PC-3 (cell line): ENCODE measurements at regions of chr15 and their contacts with region 1.

Region 1: DNA sequence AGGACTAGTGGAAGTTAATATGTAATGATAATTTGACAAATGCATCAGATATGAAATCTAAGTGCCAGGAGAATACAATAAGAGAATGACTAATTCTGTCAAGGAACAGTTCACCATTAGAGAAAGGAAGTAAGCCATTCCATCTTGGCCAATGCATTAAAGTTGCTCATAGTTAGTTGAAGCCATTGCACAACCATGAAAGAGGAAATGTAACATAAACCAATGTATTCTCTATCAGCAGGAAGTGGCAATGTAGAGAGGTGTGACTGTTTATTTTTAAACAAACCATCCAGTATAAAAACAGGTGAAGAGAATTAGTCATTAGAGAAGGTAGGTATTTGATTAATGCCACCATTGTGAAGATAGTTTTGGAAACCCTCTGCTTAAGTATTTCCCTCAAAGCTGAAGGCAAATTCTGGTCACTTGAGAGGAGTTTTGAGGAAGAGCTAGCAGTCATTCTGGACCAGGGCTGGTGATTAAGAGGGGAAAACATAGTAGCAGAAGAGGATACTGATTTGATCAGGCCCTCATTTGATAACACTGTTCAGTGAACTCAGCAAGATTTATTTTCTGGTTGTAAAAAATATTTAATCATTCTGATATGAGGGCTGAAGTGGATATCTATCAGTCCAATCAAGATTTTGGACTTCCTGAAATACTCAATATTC is 10.8 kb upstream of the ANXA2 start:
- DNase-seq: peak; percentile 94
- ATAC-seq: peak; percentile 76
- H3K4me3 ChIP-seq: peak overlapping the region; percentile 50; the same call in 1 of the 2 replicates
- H3K27ac ChIP-seq: peak overlapping the region; percentile 97
- H3K4me1 ChIP-seq: peaks cover 53% of the 10 kb centered on the region
- H3K27me3 ChIP-seq: no peaks in the 10 kb centered on the region
- CTCF ChIP-seq: no peak

Region 2: DNA sequence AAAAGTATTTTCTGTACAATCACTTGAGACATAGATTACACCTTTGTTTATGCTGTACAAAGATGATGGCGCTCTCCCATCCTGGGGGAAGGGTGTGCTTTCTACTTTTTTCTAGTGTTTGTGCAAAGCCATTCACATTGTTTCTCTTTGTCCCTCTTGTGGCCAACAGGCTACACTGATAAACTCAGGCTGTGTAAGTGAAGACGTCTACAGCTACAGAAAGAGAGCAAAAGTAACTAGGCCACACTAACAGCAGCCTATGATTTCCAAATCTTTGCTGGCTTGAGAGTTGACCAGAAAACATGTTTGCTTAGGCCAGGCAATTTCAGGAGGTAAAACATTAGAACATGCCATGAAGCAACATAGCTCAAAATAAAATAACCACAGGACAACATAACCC is 329.4 kb before region 1 on chr15:
- CTCF ChIA-PET with region 1: no interaction called
- POLR2A ChIA-PET with region 1: no interaction called
- intact Hi-C with region 1: no loop called
- DNase-seq: peak; percentile 26
- ATAC-seq: no peak; the same call in 1 of the 2 replicates
- H3K4me3 ChIP-seq: no peak overlapping the region
- H3K27ac ChIP-seq: no peak overlapping the region
- H3K4me1 ChIP-seq: peaks cover 21% of the 10 kb centered on the region
- H3K27me3 ChIP-seq: no peaks in the 10 kb centered on the region
- CTCF ChIP-seq: peak; percentile 57

Region 3: DNA sequence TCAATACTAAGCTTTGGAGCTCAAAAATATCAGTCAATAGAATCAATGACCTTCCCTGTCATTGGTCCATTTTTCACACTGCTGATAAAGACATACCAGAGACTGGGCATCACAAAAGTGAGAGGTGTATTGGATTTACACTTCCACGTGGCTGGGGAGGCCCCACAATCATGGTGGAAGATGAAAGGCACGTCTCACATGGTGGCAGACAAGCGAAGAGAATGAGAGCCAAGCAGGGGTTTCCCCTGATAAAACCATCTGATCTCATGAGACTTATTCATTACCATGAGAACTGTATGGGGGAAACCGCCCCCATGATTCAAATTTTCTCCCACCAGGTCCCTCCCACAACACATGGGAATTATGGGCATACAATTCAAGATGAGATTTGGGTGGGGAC is 92.7 kb before region 1 on chr15:
- CTCF ChIA-PET with region 1: no interaction called
- POLR2A ChIA-PET with region 1: no interaction called
- intact Hi-C with region 1: no loop called
- DNase-seq: no peak
- ATAC-seq: no peak
- H3K4me3 ChIP-seq: no peak overlapping the region
- H3K27ac ChIP-seq: no peak overlapping the region
- H3K4me1 ChIP-seq: no peaks in the 10 kb centered on the region
- H3K27me3 ChIP-seq: peaks cover 24% of the 10 kb centered on the region
- CTCF ChIP-seq: no peak

Region 4: DNA sequence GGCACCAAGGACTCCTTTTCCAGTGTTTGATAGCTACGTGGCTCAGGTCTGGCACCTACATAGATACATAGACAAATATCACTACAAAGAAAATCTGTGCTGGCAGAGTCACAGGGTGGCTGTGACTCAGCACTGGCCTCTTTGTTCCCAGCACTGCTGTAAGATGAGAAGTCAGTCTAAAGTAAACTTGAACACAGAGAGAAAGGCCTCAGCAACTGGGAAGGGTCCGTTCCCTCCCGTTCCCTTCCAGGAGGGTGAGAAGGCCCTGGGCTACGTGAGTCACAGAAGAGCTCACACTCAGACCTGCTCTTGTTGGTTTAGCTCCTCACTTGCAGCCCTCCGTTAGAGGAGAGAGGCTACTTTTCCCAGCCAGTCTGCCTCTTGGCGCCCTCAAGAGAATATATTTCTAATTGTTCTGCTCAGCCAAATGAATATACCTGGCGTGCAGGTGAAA is 33.9 kb before region 1 on chr15:
- CTCF ChIA-PET with region 1: no interaction called
- POLR2A ChIA-PET with region 1: interaction called, 3 read pairs
- intact Hi-C with region 1: loop called (anchors 1 kb)
- DNase-seq: peak; percentile 97
- ATAC-seq: peak; percentile 77
- H3K4me3 ChIP-seq: peak overlapping the region; percentile 38; the same call in 1 of the 2 replicates
- H3K27ac ChIP-seq: peak overlapping the region; percentile 98
- H3K4me1 ChIP-seq: peaks cover 91% of the 10 kb centered on the region
- H3K27me3 ChIP-seq: no peaks in the 10 kb centered on the region
- CTCF ChIP-seq: peak; percentile 34; the same call in 1 of the 2 replicates

Region 5: DNA sequence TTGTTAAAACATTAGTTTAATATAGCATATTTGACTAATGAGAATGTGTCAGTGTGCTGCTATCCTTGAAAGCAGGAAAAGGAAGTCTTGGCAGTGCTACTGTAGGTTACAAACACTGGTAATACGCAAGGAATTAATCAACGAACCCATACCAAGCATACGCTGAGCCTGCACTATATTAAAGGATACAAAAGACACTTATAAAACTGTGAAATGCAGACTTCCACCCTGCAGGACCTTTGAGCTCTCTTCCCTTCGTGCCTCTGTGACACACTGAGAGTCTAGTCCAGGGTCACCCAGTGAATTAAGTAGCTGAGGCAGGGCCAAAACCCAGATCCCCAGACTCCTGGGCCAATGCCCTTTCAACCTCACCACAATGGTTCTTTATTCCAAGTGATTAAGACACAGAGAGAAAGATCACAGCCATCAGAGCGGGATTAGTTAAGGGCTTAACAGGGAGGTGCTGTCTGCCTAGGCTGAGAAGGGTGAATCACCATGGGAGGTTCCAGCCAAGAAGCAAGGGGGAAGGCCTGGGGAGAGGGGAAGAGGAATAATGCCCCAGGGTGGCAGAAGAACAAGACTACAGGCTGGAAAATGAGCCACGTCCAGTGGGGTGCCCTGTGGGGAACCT is 17.6 kb before region 1 on chr15:
- CTCF ChIA-PET with region 1: interaction called, 3 read pairs
- POLR2A ChIA-PET with region 1: interaction called, 12 read pairs
- intact Hi-C with region 1: no loop called
- DNase-seq: peak; percentile 77
- ATAC-seq: peak; percentile 38
- H3K4me3 ChIP-seq: peak overlapping the region; percentile 67
- H3K27ac ChIP-seq: peak overlapping the region; percentile 98
- H3K4me1 ChIP-seq: peaks cover 82% of the 10 kb centered on the region
- H3K27me3 ChIP-seq: no peaks in the 10 kb centered on the region
- CTCF ChIP-seq: no peak; the same call in 1 of the 2 replicates

Region 6: DNA sequence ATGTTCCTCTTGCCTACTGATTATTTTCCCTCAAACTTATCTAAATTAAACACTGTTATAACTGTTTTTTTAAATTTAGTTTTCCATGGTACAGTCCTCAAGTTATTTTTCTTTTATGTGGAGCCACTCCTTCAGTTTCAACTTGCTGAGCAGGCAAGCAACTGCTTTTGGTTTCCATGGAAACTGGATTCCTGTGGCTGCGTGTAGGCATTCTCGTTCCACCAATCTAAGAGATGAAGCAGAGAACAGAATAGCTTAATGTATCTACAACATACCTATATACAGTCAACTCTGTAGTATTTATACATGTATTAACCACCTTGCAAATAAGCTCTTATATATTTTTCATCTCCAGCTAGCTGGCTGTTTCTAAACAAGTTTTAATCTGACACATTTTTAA is 15.0 kb after region 1 on chr15:
- CTCF ChIA-PET with region 1: interaction called, 3 read pairs
- POLR2A ChIA-PET with region 1: interaction called, 10 read pairs
- intact Hi-C with region 1: no loop called
- DNase-seq: peak; percentile 88
- ATAC-seq: peak; percentile 60
- H3K4me3 ChIP-seq: no peak overlapping the region
- H3K27ac ChIP-seq: peak overlapping the region; percentile 18; the same call in 1 of the 2 replicates
- H3K4me1 ChIP-seq: peaks cover 57% of the 10 kb centered on the region
- H3K27me3 ChIP-seq: no peaks in the 10 kb centered on the region
- CTCF ChIP-seq: no peak

Region 7: DNA sequence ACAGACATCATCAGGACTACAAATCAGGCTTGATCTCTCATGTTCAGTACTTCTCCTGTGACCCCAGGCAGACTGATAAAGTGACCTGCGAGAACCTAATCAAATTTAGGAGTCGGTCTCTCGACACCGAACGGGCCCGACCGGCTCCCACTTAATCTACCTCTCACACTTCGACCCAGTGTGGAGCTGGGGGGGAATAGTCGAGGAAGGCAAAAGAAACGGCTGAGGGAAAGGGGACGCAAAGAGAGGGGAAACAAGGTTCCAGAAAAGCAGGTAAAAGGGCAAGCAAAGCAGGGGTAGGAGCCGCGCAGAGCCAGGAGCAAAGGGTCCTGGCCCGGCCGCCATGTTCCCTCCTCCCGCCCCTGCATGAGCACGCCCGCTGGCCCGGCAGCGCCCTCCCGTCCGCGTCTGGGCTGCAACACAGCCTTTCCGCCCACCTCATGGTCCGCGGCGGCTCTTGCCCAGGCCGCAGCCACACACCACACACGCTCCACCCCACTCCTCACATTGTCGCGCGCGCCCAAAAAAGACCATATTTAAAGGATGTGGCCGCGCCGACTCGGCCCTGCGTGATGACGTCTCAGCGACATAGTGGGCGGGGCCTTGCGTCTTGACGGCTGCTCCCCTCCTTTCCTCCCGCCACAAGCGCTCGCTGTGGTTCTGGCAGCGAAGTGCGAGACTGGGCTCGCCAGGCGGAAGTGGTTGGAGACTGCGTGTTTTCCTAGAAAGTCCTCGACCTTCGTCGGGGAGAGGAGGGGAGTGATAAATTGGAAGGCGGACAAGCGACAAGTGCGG is 70.2 kb after region 1 on chr15 and contains the start of gene ICE2:
- CTCF ChIA-PET with region 1: no interaction called
- POLR2A ChIA-PET with region 1: no interaction called
- intact Hi-C with region 1: loop called (anchors 5 kb)
- DNase-seq: peak; percentile 89
- ATAC-seq: peak; percentile 87
- H3K4me3 ChIP-seq: peak within 1 kb of the TSS; percentile 96
- H3K27ac ChIP-seq: peak within 1 kb of the TSS; percentile 82
- H3K4me1 ChIP-seq: peaks cover 33% of the 10 kb centered on the region
- H3K27me3 ChIP-seq: no peaks in the 10 kb centered on the region
- CTCF ChIP-seq: no peak
- total RNA-seq, gene ICE2: 14.8 and 23.7 TPM in 2 replicates